Left cardiac atrium (tissue), 4 donors: ENCODE measurements at regions of chr13 and their contacts with region 1.

Region 1: GRCh38 chr13:45417790-45418534 is at the start of gene SLC25A30:
- DNase-seq: peak; percentile 97
- ATAC-seq: peak; percentile 99
- total RNA-seq, gene SLC25A30: 57.9 to 73.8 TPM

Region 2: DNA sequence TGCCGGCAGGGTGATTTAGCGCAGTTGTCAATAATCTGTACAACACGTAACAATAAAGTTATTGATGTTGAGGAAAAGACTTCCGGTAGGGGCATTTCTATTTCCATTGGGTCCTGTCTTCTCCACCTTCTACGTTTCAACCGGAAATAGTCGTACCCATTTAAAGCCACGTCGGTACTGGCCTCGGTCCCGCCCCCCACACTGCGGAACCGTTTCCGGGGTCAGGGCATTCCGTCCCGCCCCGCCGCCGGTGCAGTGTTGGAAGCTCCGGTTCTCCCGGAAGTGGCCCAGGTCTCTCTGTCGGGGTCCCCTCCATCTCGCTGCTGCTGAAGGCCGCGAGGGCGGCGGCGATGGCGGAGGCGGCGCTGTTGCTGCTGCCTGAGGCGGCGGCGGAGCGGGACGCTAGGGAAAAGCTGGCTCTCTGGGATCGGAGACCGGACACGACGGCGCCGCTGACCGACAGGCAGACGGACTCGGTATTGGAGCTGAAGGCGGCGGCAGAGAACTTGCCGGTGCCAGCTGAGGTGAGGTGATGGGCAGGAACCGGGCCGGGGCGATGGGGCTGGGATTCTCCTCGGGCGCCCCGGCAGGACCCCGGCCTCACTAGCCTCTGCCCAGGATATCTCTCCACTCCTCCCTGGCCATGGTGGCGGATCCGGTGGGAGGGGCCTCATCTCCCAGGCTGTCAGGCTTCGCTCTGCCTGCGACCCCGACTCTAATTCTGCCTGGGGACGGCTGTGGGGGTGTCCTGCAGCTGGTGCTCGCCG is 46.9 kb after region 1 on chr13 and contains the start of gene COG3:
- intact Hi-C with region 1: loop called in 1 of 2 experiments (anchors 5 kb)
- DNase-seq: peak; percentile 96
- ATAC-seq: peak; percentile 99
- total RNA-seq, gene COG3: 11.7 to 18.6 TPM